Activated CD8-positive, alpha-beta memory T cell treated with anti-CD3 and anti-CD28 coated beads, Interleukin-2, amount 10 ng/mL, durations not matched to agents 7 days and 5 days (primary cell): ENCODE measurements at regions of chr10 and their contacts with region 1.

Region 1: DNA sequence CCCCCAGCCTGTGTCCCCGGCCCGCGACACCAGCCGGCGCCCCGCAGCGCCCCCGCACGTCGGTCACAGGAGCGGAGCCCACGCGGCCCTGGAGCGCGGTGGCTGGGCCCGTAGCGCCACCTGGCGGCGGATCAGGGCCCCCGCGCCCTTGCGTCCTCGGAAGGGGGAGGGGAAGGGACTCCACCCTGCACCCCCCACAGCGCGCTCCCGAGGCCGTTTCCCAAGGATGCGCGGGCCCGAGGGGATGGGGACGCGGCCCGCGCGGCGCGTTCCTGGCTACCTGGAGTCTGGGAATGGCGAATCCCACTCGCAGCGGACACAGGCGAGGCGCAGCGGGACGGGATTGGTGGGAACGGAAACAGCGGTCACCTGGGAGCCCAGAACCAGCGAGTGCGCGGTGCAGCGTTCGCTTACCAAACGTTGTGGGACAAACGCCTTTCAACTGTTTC is 23.8 kb upstream of the MKI67 start:
- DNase-seq: peak; percentile 81
- ATAC-seq: peak; percentile 99
- H3K4me3 Mint-ChIP-seq: peak overlapping the region; percentile 69
- H3K27ac Mint-ChIP-seq: no peak overlapping the region
- H3K4me1 Mint-ChIP-seq: peaks cover 27% of the 10 kb centered on the region
- H3K27me3 Mint-ChIP-seq: peaks cover 33% of the 10 kb centered on the region

Region 2: DNA sequence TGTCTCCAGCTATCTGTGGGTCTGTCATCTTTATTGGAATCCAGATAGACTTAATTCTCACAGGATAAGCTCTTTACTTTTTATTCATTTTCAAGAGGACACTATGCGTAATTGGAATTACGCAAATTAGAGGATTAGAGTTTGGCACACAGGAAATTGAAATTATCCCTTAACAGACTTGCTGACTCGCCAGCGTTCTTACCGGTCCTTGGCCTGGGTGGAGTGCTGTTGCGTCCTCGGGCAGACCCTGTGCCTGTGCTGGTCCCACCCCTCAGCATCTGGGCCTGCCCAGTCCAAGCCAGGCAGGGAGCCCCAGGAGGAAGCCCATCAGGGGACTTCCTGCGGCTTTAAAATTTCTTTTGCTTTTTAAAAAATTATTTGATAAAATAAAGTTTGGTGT is 125.6 kb before region 1 on chr10:
- CTCF ChIA-PET with region 1: no interaction called
- DNase-seq: no peak
- ATAC-seq: no peak
- H3K4me3 Mint-ChIP-seq: no peak overlapping the region
- H3K27ac Mint-ChIP-seq: no peak overlapping the region
- H3K4me1 Mint-ChIP-seq: peaks cover 21% of the 10 kb centered on the region
- H3K27me3 Mint-ChIP-seq: no peaks in the 10 kb centered on the region

Region 3: GRCh38 chr10:128035557-128035973 is 114.5 kb before region 1 on chr10:
- CTCF ChIA-PET with region 1: interaction called, 10 read pairs
- DNase-seq: peak; percentile 71
- ATAC-seq: peak; percentile 89
- H3K4me3 Mint-ChIP-seq: no peak overlapping the region
- H3K27ac Mint-ChIP-seq: no peak overlapping the region
- H3K4me1 Mint-ChIP-seq: peaks cover 2% of the 10 kb centered on the region
- H3K27me3 Mint-ChIP-seq: peaks cover 5% of the 10 kb centered on the region

Region 4: DNA sequence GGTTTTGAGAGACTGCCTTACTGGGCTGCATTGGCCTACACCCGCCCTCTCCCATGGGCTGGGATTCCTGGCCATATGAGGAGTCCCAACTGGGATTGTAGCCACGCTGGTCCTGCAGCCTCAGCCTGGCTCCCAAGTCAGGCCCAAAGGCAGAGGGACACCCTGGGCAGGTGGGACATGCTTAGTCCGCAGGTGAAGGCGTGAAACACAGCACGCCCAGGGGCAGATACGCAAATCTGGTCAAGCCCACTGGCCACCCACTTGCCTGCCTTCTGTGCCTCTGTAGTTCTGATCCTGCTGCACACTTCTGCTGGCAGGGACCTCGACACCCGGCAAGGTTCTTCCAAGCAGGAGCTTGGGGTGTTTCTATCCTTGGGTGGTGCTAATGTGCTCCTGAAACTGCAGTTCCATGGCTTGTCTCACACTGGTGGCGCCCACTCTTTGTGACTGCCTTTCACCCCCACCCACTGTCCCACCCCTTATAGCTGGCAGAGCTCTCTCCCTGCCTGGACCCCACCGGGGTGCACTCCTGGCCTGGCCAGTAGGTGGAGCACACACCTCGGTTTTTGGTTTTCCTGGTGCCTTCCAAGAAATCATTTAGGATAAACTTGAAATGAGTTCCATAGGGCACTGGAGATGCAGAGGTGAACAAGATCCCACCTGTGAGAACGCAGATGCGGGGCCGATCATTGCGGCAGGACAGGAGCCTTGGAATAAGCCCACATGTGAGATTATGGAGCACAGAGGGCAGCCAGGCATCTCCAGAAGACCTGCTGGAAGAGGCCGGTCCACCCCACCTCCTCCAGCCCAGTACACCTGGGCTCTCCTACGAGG is 71.7 kb before region 1 on chr10:
- CTCF ChIA-PET with region 1: interaction called, 65 read pairs
- DNase-seq: peak; percentile 61
- ATAC-seq: peak; percentile 75
- H3K4me3 Mint-ChIP-seq: no peak overlapping the region
- H3K27ac Mint-ChIP-seq: no peak overlapping the region
- H3K4me1 Mint-ChIP-seq: peaks cover 13% of the 10 kb centered on the region
- H3K27me3 Mint-ChIP-seq: no peaks in the 10 kb centered on the region

Region 5: GRCh38 chr10:128161031-128161430 is 11.0 kb after region 1 on chr10:
- CTCF ChIA-PET with region 1: interaction called, 19 read pairs
- DNase-seq: no peak
- ATAC-seq: no peak
- H3K4me3 Mint-ChIP-seq: no peak overlapping the region
- H3K27ac Mint-ChIP-seq: peak overlapping the region; percentile 44
- H3K4me1 Mint-ChIP-seq: peaks cover 27% of the 10 kb centered on the region
- H3K27me3 Mint-ChIP-seq: peaks cover 21% of the 10 kb centered on the region

Region 6: DNA sequence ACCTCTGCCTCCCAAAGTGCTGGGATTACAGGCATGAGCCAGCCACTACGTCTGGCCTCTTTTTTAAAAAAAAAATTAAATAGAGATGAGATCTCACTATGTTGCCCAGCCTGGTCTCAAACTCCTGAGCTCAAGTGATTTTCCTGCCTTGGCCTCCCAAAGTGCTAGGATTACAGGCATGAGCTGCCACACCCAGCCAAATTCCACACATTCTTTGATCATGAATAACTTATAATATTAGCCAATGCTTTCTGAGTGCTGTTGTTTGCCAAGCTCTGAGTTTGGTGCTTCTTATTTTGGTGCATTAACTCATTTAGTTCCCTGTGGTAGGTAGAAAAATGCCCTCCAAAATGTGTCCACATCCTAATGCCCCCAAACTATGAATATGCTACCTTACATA is 23.3 kb after region 1 on chr10:
- CTCF ChIA-PET with region 1: interaction called, 14 read pairs
- DNase-seq: no peak
- ATAC-seq: no peak
- H3K4me3 Mint-ChIP-seq: no peak overlapping the region
- H3K27ac Mint-ChIP-seq: no peak overlapping the region
- H3K4me1 Mint-ChIP-seq: peaks cover 2% of the 10 kb centered on the region
- H3K27me3 Mint-ChIP-seq: peaks cover 35% of the 10 kb centered on the region

Region 7: DNA sequence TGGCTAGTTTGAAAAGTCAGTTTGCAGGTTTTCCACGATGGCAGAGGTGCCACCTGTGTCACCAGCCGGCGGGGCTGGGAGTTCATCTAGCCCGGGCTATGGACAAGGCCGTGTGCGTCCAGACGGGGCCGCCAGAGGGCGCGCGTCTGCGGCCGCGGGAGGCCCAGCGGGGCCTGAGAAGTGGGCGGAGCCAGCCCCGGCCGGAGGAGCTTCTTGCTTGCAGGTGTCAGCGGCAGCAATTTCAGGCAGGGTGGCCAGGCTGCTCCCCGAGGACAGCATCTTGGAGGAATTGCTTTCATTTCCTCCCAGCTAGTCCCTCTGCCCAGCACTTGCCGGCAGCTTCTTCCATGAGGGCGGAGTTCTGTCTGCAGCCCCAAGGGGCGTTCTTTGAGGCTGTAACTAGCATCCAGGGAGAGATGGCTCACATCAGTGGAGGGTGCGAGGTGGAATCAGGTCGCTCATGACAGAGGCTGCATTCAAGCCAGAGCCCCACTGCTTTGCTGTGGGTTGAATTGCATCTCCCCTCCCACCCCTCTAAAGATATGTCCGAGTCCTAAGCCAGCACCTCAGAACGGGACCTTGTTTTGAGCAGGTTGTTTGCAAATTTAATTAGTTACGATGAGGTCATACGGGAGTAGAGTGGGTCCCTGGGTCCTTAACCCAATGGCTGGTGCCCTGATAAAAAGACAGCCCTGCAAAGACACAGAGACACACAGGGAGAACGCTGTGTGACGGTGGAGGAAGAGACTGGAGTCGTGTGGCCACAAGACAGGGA is 62.1 kb after region 1 on chr10:
- CTCF ChIA-PET with region 1: interaction called, 12 read pairs
- DNase-seq: peak; percentile 87
- ATAC-seq: peak; percentile 79
- H3K4me3 Mint-ChIP-seq: peak overlapping the region; percentile 68
- H3K27ac Mint-ChIP-seq: peak overlapping the region; percentile 64
- H3K4me1 Mint-ChIP-seq: peaks cover 13% of the 10 kb centered on the region
- H3K27me3 Mint-ChIP-seq: peaks cover 14% of the 10 kb centered on the region

Region 8: GRCh38 chr10:128263891-128264688 is 114.0 kb after region 1 on chr10:
- CTCF ChIA-PET with region 1: no interaction called
- DNase-seq: peak; percentile 69
- ATAC-seq: peak; percentile 64
- H3K4me3 Mint-ChIP-seq: no peak overlapping the region
- H3K27ac Mint-ChIP-seq: no peak overlapping the region
- H3K4me1 Mint-ChIP-seq: no peaks in the 10 kb centered on the region
- H3K27me3 Mint-ChIP-seq: peaks cover 31% of the 10 kb centered on the region

Region 9: GRCh38 chr10:128579280-128579865 is 429.3 kb after region 1 on chr10:
- CTCF ChIA-PET with region 1: no interaction called
- DNase-seq: no peak
- ATAC-seq: no peak
- H3K4me3 Mint-ChIP-seq: no peak overlapping the region
- H3K27ac Mint-ChIP-seq: no peak overlapping the region
- H3K4me1 Mint-ChIP-seq: no peaks in the 10 kb centered on the region
- H3K27me3 Mint-ChIP-seq: no peaks in the 10 kb centered on the region